ENCODE measurements at regions of chr17 and their contacts with region 1.

Region 1: DNA sequence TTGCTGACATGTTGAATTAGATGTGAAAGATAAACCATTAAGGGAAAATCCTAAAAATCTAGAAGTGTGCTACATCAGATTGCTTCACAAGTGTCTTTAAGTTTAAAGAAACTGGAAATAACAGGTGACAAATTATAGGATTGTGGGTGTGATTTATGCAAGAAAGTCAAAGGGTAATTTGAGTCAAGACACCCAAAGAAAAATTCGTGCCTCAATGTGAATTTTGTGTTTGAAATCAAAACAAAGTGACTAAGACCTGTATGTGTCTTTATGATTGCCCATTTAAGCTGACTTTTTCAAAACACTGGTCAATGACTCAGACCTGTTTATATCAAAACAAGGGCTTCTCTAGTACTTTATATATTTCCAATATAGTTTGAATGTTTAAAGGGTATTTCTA is 5.2 kb upstream of the PYY start:
- DNase-seq: no peak
- H3K4me3 ChIP-seq: no peak overlapping the region
- H3K27ac ChIP-seq: no peak overlapping the region
- H3K4me1 ChIP-seq: no peaks in the 10 kb centered on the region
- H3K27me3 ChIP-seq: no peaks in the 10 kb centered on the region
- CTCF ChIP-seq: no peak

Region 2: DNA sequence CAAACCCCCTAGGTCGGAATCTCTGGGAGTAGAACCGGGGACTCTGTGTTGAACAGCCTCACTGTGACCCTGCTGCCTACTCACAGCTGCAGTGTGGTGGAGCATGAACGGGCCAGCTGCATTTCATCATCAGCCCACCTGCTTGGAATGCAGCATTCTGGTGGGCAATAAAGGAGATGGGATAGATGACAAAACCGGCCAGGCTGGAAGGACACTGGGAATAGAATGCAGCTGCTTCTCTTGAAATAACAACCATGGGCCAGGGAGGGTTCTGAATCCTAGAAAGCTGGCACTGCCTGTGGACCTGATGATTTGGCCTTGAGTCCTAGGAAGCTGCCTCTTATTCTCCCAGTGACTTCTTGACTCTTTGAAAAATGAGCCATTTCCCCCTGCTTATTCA is 155.2 kb before region 1 on chr17:
- CTCF ChIA-PET with region 1: no interaction called
- POLR2A ChIA-PET with region 1: no interaction called
- intact Hi-C with region 1: no loop called
- DNase-seq: no peak
- H3K4me3 ChIP-seq: no peak overlapping the region
- H3K27ac ChIP-seq: no peak overlapping the region
- H3K4me1 ChIP-seq: no peaks in the 10 kb centered on the region
- H3K27me3 ChIP-seq: no peaks in the 10 kb centered on the region
- CTCF ChIP-seq: no peak

Region 3: GRCh38 chr17:44053125-44053872 is 94.3 kb after region 1 on chr17:
- CTCF ChIA-PET with region 1: no interaction called
- POLR2A ChIA-PET with region 1: interaction called, 18 read pairs
- intact Hi-C with region 1: no loop called
- DNase-seq: no peak
- H3K4me3 ChIP-seq: no peak overlapping the region
- H3K27ac ChIP-seq: no peak overlapping the region
- H3K4me1 ChIP-seq: no peaks in the 10 kb centered on the region
- H3K27me3 ChIP-seq: no peaks in the 10 kb centered on the region
- CTCF ChIP-seq: no peak

Measured in A673 (cell line).